A673 (cell line): ENCODE measurements at regions of chr1 and their contacts with region 1.

Region 1: GRCh38 chr1:41235893-41236292 is 6.2 kb downstream of the SCMH1 start:
- DNase-seq: no peak
- H3K4me3 ChIP-seq: no peak overlapping the region
- H3K27ac ChIP-seq: no peak overlapping the region
- H3K4me1 ChIP-seq: peaks cover 26% of the 10 kb centered on the region
- H3K27me3 ChIP-seq: no peaks in the 10 kb centered on the region
- CTCF ChIP-seq: no peak

Region 2: DNA sequence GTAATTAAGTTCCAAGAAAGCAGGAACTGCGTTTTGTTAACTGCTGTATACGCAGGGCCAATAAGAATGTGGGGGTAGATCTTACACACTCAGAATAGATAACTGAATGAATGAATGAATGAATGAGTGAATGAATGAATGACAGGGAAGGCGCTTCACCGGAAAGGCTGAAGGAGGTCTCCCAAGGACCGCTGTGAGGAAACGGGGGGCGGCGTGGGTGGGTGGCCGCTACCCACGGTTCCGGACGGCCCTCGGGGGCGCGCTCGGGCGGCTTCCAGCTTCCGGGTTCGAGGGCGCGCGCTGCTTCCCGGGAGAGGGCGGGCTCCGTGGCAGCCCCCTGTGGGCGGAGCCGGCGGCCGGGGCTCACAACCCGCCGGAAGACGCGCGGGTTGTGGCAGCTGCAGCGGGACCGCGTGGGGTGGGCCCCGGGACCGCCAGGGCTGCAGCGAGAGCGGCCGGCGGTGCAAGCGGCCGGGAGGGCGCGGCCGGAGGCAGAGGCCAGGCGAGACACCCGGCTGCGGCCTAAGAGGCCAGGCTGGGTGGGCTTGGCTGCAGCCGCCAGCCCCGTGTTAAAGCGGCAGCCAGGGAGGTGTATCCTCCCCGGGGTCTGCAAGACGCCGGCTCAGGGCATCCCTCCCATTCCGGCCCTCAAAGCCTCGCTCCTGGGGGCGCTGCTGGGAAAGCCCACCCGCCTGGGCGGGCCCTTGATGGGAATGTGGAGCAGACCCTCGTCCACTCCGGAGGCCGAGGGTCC is 758.8 kb before region 1 on chr1 and contains the start of gene ZFP69:
- CTCF ChIA-PET with region 1: no interaction called
- POLR2A ChIA-PET with region 1: no interaction called
- intact Hi-C with region 1: no loop called
- DNase-seq: peak; percentile 89
- H3K4me3 ChIP-seq: peak within 1 kb of the TSS; percentile 76
- H3K27ac ChIP-seq: peak within 1 kb of the TSS; percentile 51
- H3K4me1 ChIP-seq: peaks cover 5% of the 10 kb centered on the region
- H3K27me3 ChIP-seq: no peaks in the 10 kb centered on the region
- CTCF ChIP-seq: no peak
- total RNA-seq, gene ZFP69: 6.7 and 7.1 TPM in 2 replicates

Region 3: DNA sequence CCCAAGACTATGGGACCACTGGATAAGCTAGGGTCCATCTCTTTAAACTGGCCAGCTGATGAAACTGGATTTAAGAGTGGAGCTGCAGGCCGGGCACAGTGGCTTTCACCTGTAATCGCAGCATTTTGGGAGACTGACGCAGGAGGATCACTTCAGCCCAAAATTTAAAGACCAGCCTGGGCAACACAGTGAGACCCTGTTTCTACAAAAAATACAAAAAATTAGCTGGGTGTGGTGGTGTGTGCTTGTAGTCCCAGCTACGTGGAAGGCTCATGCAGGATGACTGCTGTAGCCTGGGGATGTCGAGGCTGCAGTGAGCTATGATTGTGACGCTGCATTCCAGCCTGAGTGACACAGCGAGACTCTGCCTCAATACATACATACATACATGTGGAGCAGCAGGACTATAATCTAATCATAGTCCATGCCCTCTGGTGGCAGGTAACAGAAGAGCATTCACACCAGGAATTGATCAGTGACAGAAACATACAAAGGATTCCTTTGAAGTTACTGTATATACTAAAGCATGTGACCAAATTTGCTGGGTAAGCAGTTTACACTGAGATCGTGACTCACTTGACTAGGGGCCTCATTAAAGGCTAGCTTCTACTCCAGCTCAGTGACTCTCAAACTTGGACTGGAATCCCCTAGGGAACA is 112.9 kb before region 1 on chr1:
- CTCF ChIA-PET with region 1: interaction called, 15 read pairs
- POLR2A ChIA-PET with region 1: no interaction called
- intact Hi-C with region 1: no loop called
- DNase-seq: peak; percentile 84
- H3K4me3 ChIP-seq: no peak overlapping the region
- H3K27ac ChIP-seq: peak overlapping the region; percentile 7
- H3K4me1 ChIP-seq: peaks cover 6% of the 10 kb centered on the region
- H3K27me3 ChIP-seq: no peaks in the 10 kb centered on the region
- CTCF ChIP-seq: peak; percentile 63

Region 4: GRCh38 chr1:41305576-41306363 is 69.9 kb after region 1 on chr1:
- CTCF ChIA-PET with region 1: no interaction called
- POLR2A ChIA-PET with region 1: no interaction called
- intact Hi-C with region 1: no loop called
- DNase-seq: no peak
- H3K4me3 ChIP-seq: no peak overlapping the region
- H3K27ac ChIP-seq: no peak overlapping the region
- H3K4me1 ChIP-seq: no peaks in the 10 kb centered on the region
- H3K27me3 ChIP-seq: no peaks in the 10 kb centered on the region
- CTCF ChIP-seq: no peak